Transverse colon (tissue), 4 donors: ENCODE measurements at regions of chr13 and their contacts with region 1.

Region 1: GRCh38 chr13:42740753-42741152 is 40.6 kb upstream of the FAM216B start:
- DNase-seq: peak; percentile 44
- H3K4me3 ChIP-seq: no peak overlapping the region
- H3K27ac ChIP-seq: no peak overlapping the region
- H3K4me1 ChIP-seq: no peaks in the 10 kb centered on the region
- H3K27me3 ChIP-seq: no peaks in the 10 kb centered on the region
- CTCF ChIP-seq: no peak
- EP300 ChIP-seq: no peak
- POLR2A ChIP-seq: no peak

Region 2: GRCh38 chr13:42615691-42616090 is 125.1 kb before region 1 on chr13:
- in situ Hi-C with region 1: no loop called
- intact Hi-C with region 1: no loop called
- DNase-seq: no peak
- H3K4me3 ChIP-seq: no peak overlapping the region
- H3K27ac ChIP-seq: no peak overlapping the region
- H3K4me1 ChIP-seq: no peaks in the 10 kb centered on the region
- H3K27me3 ChIP-seq: no peaks in the 10 kb centered on the region
- CTCF ChIP-seq: no peak
- EP300 ChIP-seq: no peak
- POLR2A ChIP-seq: no peak

Region 3: DNA sequence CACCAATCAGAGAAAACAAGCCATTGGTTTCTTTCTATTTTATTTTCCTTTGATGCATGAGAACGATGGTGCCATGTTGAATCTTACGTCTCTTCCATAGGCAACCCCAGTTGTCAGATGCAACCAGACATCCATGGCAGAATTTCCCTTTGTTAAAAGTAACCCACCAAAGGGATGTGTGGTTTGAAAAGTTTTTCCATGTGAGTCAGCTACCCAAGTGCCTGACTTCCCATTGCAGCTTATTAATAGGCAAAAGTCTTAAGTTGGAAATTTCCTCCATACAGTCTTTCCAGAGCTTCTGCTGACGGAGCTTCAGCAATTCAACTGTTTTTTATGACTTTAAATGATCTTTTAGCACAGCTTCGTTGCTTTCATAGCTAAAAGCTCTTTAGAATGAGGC is 33.2 kb before region 1 on chr13:
- in situ Hi-C with region 1: no loop called
- intact Hi-C with region 1: loop called (anchors 1 kb)
- DNase-seq: no peak
- H3K4me3 ChIP-seq: no peak overlapping the region
- H3K27ac ChIP-seq: no peak overlapping the region
- H3K4me1 ChIP-seq: no peaks in the 10 kb centered on the region
- H3K27me3 ChIP-seq: no peaks in the 10 kb centered on the region
- CTCF ChIP-seq: no peak
- EP300 ChIP-seq: no peak
- POLR2A ChIP-seq: no peak

Region 4: DNA sequence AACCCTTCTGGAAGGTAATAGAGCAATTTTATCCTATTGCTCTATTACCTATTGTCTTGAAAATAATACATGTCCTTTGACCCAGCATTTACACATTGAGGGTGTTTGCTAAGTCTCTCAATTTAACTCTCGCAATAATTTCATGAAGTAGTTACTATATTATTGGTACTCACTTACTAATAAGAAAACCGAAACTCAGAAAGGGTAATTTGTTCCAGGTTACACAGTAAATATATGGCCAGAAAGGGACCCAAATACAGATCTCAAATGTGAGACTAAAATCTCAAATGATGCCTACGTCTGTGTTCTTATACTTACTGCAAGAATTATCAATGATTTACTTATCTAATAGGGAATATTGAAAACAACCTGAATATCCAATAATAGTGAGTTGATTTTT is 10.9 kb after region 1 on chr13:
- in situ Hi-C with region 1: no loop called
- intact Hi-C with region 1: no loop called
- DNase-seq: no peak
- H3K4me3 ChIP-seq: no peak overlapping the region
- H3K27ac ChIP-seq: no peak overlapping the region
- H3K4me1 ChIP-seq: peaks cover 0 to 4% (median 0%) of the 10 kb centered on the region in 4 donors
- H3K27me3 ChIP-seq: no peaks in the 10 kb centered on the region
- CTCF ChIP-seq: no peak
- EP300 ChIP-seq: no peak
- POLR2A ChIP-seq: no peak